Activated T-helper 1 cell treated with anti-CD3 and anti-CD28 coated beads, Interleukin-12 subunit alpha, Interleukin-12 subunit beta, Interleukin-2, Interleukin-4 antibody, amounts not matched to agents 30 ng/mL and 10 ng/mL and 1 ng/mL, durations not matched to agents 14 hours and 24 hours and 36 hours (primary cell): ENCODE measurements at regions of chr12 and their contacts with region 1.

Region 1: DNA sequence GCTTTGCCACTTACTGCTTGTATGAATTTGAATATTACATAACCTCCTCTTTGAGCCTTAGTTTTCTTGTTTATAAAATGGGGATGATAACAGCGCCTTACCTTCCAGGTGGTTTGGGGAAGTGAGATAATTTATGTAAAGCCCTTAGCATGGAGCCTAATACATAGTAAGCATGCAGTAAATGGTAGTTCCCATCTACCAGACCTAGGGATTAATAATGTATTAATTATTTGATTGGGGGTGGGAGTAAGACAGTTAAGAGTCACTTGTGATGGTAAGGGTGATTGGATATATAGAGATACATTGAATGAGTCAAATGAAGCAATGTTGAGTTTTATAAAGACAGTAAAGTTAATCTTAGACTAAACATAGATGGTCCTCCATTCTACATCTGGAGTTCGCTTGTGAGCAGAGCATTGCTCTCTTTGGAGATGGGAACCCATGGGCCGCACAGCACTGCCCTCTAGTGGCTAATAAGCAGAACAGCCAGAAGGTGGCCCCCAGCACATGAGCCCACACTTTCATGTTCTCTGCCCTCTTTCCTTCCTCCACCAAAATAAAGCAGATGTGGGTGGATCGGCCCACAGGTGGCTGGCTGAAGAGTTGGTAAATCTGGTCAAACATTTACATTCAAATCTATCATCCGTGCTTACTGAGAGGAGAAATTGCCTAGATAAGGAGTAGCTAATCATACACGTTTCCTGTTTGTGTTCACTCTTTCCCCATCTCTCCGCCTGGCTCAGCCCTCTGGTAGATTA is 26.5 kb upstream of the TAMALIN start:
- DNase-seq: peak; percentile 52
- H3K4me3 Mint-ChIP-seq: no peak overlapping the region
- H3K27ac Mint-ChIP-seq: peak overlapping the region; percentile 41
- H3K4me1 Mint-ChIP-seq: peaks cover 31% of the 10 kb centered on the region
- H3K27me3 Mint-ChIP-seq: peaks cover 5% of the 10 kb centered on the region

Region 2: DNA sequence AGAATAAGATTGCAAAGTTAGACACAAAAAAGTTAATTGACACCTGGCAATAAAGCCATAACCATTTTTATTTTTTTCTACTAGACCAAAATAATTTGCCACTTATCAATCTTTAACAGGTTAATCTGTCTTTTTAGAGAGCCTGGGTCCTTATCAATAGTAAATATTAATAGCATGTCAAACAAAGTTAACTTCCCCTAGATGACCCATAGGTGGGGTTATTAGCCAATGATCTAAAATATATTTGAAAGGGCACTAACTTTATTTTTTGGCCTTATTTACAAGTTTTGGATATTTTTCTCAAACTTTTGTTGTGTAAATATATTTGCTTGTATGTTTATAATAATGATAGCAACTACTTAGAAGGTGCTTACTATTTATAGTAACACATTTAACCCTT is 88.4 kb before region 1 on chr12:
- intact Hi-C with region 1: loop called (anchors 1 kb)
- DNase-seq: no peak
- H3K4me3 Mint-ChIP-seq: no peak overlapping the region
- H3K27ac Mint-ChIP-seq: no peak overlapping the region
- H3K4me1 Mint-ChIP-seq: no peaks in the 10 kb centered on the region
- H3K27me3 Mint-ChIP-seq: peaks cover 7% of the 10 kb centered on the region

Region 3: GRCh38 chr12:51926718-51927117 is 53.5 kb before region 1 on chr12:
- intact Hi-C with region 1: loop called (anchors 1 kb)
- DNase-seq: peak; percentile 24
- H3K4me3 Mint-ChIP-seq: no peak overlapping the region
- H3K27ac Mint-ChIP-seq: no peak overlapping the region
- H3K4me1 Mint-ChIP-seq: peaks cover 13% of the 10 kb centered on the region
- H3K27me3 Mint-ChIP-seq: peaks cover 13% of the 10 kb centered on the region

Region 4: DNA sequence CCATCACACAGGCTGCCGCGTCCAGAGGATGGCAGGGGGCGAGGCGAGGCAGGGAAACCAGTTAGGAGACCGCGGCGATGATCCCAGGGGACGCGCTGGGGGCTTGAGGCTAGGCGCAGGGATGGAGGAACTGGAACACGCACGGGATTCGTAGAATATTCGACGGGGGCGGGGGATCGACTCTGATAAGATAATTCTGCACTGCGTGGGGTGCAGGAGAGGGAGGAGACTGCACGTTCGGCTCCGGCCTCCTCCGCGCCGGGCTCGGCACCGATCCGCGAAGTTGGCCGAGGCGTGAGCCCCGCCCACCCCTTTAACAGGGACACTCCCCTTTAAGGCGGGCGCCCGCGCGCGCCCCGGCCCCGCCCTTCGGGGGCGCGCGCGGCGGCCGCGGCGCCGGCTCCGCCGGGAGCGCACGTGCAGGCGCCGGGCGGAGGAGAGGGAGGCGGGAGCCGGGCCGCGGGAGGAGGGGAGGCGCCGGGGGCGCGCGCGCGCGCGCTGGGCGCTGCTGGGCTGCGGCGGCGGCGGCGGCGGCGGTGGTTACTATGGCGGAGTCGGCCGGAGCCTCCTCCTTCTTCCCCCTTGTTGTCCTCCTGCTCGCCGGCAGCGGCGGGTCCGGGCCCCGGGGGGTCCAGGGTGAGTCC is 28.9 kb before region 1 on chr12 and contains the start of gene ACVR1B:
- intact Hi-C with region 1: no loop called
- DNase-seq: peak; percentile 83
- H3K4me3 Mint-ChIP-seq: peak within 1 kb of the TSS; percentile 89
- H3K27ac Mint-ChIP-seq: peak within 1 kb of the TSS; percentile 67
- H3K4me1 Mint-ChIP-seq: peaks cover 51% of the 10 kb centered on the region
- H3K27me3 Mint-ChIP-seq: peaks cover 40% of the 10 kb centered on the region
- total RNA-seq, gene ACVR1B: 11.4 and 12.0 TPM in 2 replicates

Region 5: GRCh38 chr12:52171950-52172512 is 191.8 kb after region 1 on chr12:
- intact Hi-C with region 1: no loop called
- DNase-seq: no peak
- H3K4me3 Mint-ChIP-seq: no peak overlapping the region
- H3K27ac Mint-ChIP-seq: no peak overlapping the region
- H3K4me1 Mint-ChIP-seq: no peaks in the 10 kb centered on the region
- H3K27me3 Mint-ChIP-seq: peaks cover 7% of the 10 kb centered on the region

Region 6: DNA sequence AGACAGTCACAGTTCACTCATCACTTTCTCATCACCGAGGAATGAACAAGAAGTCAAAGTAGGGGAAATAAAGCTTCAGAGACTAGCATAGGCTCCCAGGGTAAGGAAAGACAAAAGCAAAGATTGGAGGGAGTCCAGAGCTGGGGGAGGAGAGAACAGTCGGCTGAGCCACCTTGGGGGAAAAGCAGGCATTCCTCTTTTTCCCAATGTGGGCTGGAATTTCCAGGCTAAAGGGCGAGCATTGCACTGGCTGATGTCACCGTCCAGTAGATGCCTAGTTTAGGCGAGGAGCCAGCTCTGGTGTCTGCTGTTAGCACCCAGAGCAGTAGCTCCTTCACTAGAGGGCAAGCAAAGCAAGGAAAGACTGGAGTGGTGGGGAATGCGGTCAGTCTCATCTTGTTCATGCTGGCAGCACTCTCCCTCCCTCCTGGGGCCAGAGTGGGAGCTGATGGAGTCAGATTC is 462.4 kb after region 1 on chr12:
- intact Hi-C with region 1: no loop called
- DNase-seq: no peak
- H3K4me3 Mint-ChIP-seq: no peak overlapping the region
- H3K27ac Mint-ChIP-seq: no peak overlapping the region
- H3K4me1 Mint-ChIP-seq: no peaks in the 10 kb centered on the region
- H3K27me3 Mint-ChIP-seq: peaks cover 27% of the 10 kb centered on the region

Region 7: DNA sequence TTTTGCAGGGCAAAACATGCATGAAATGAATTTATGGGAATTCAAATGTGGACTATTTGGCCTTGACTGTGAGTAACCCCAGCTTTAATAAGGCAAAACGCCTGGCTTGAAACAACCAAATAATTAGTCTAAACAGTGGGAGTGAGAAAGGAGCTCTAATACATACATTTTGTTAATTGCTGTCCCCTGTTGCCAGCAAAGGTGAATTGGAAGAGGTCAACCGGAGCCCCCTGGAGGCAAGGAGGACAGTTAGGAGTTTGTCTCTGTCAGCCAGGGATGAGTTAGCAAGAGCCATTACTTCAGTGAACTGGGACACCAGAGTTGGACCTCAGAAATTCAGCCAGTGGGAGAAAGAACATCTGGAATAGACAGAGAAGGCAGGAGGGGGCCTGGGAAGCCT is 779.5 kb after region 1 on chr12:
- intact Hi-C with region 1: no loop called
- DNase-seq: no peak
- H3K4me3 Mint-ChIP-seq: no peak overlapping the region
- H3K27ac Mint-ChIP-seq: no peak overlapping the region
- H3K4me1 Mint-ChIP-seq: no peaks in the 10 kb centered on the region
- H3K27me3 Mint-ChIP-seq: peaks cover 2% of the 10 kb centered on the region